ENCODE measurements at regions of chr1 and their contacts with region 1.

Region 1: DNA sequence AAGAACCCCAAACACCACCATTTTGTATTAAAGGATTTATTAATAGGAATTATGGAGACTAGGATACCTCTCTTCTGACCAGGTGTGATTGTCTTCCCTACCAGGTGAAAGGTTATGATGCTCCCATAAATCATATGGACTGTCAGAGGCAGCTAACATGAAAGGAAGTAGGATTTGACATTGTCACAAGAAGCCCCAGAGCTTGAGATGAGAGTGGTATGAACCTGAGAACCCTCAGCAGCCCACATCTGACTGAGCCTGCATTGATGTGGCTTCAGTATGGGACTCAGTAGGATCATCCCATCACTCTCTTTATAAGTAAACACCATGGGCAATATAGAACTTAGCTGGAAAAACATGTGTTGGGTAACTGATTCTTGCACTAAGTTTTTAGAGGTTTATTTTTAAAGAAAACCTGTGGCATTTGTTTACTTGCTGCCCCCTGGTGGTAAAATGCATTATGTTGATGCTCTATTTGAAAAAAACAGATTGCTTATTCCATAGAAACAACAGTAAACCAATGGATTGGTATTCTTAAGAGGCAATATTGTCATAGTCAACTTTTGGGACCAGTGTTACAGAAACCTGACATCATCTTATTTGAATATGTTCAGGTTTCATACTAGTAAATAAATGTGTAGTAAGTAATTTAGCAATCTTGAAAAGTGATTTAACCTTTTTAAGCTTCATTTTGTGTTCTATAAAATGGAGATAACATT is 16.6 kb upstream of the CACYBP start:
- DNase-seq: peak in 5 of 9 experiments; percentile 41 to 77 (median 63)
- ATAC-seq: peak; percentile 48
- H3K4me3 ChIP-seq: no peak overlapping the region
- H3K4me3 Mint-ChIP-seq: no peak overlapping the region
- H3K27ac ChIP-seq: no peak overlapping the region
- H3K27ac Mint-ChIP-seq: no peak overlapping the region
- H3K4me1 ChIP-seq: peaks cover 9% of the 10 kb centered on the region
- H3K4me1 Mint-ChIP-seq: peaks cover 38% of the 10 kb centered on the region
- H3K27me3 ChIP-seq: no peaks in the 10 kb centered on the region
- H3K27me3 Mint-ChIP-seq: no peaks in the 10 kb centered on the region
- CTCF ChIP-seq: peak; percentile 56

Region 2: DNA sequence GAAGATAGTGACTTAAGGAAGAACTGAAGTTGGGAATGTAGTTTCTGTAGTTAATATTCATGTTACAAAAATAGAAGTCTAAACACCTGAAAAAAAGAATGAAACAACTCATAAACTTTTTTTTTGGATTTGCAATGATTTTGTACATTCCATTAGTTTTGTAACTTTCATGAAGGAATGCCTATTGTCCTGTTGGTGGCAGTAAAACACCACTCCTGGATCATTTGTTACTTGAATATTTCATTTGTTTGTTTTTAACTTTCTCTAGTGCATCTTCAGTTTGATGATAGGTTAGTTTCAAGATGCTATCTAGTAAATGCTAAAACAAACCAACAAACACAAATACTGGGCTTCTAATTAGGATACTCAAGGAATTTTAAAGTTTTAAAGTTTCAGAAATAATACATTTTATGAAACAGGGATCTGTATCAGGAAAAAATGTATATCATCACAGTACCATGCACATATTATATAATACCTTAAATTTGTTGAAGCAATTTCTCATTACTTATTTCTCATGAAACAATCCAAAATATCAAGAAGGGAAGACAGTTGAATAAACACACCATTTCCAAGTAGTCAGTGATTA is 213.1 kb before region 1 on chr1:
- CTCF ChIA-PET with region 1: interaction called, 18 read pairs
- POLR2A ChIA-PET with region 1: interaction called, 8 read pairs
- intact Hi-C with region 1: loop called (anchors 1 kb)
- DNase-seq: peak in 2 of 9 experiments; percentile 64 to 75
- ATAC-seq: peak; percentile 65
- H3K4me3 ChIP-seq: no peak overlapping the region
- H3K4me3 Mint-ChIP-seq: no peak overlapping the region
- H3K27ac ChIP-seq: no peak overlapping the region
- H3K27ac Mint-ChIP-seq: no peak overlapping the region
- H3K4me1 ChIP-seq: no peaks in the 10 kb centered on the region
- H3K4me1 Mint-ChIP-seq: peaks cover 3% of the 10 kb centered on the region
- H3K27me3 ChIP-seq: no peaks in the 10 kb centered on the region
- H3K27me3 Mint-ChIP-seq: no peaks in the 10 kb centered on the region
- CTCF ChIP-seq: peak; percentile 78

Region 3: DNA sequence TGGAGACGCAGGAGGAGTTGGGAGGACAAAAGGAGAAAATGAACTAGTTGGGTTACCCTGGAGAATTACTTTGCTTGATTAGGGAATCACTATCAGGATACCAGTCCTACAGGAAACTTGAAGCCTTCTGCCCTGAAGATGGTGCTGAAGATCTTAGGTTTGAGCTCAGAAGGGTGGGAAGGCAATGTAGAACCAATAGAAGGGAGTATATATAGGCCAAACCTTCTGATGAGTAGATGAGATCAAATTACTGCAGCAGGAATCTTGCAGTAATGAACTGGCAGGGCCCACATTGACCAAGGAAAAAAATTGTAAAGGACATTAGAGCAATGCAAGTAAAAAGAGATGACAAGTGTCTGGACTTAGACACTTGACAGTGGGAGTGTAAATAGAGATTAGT is 99.7 kb before region 1 on chr1:
- CTCF ChIA-PET with region 1: interaction called, 17 read pairs
- POLR2A ChIA-PET with region 1: interaction called, 3 read pairs
- intact Hi-C with region 1: loop called (anchors 1 to 2 kb)
- DNase-seq: peak in 2 of 9 experiments; percentile 39 to 53
- ATAC-seq: peak; percentile 62
- H3K4me3 ChIP-seq: no peak overlapping the region
- H3K4me3 Mint-ChIP-seq: no peak overlapping the region
- H3K27ac ChIP-seq: no peak overlapping the region
- H3K27ac Mint-ChIP-seq: no peak overlapping the region
- H3K4me1 ChIP-seq: no peaks in the 10 kb centered on the region
- H3K4me1 Mint-ChIP-seq: peaks cover 6% of the 10 kb centered on the region
- H3K27me3 ChIP-seq: no peaks in the 10 kb centered on the region
- H3K27me3 Mint-ChIP-seq: no peaks in the 10 kb centered on the region
- CTCF ChIP-seq: no peak

Region 4: DNA sequence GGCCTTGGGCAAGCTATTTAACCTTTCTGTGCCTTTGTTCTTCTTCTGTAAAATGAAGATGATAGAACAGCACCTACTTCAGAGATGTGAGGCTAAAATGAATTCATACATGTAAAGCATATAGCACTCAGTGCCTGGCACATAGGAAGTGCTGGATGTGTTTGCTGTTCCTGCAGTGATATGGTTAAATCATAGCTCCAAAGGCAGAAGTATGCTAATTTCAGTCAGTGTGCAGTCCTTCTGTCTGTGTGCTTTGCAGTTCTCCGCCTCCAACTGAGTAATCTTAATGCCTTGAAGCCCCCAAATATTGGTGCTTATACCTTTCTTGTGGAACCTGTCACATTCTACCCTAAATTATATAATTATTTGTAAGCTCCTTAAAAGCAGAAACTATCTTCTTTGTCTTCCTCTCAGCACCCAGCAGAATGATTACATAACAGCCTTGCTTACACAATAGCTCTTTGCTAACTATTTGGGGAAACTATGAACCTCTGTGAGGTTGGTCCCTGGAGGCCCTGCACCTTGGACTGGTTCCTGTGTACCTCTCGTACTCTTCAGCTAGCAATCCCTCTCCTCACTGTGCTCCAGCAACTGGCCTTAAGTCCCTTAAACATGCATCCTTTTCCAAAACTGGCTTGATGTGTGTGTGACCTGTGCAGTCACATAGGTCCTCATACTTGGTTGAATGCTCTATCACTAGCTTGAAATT is 40.4 kb before region 1 on chr1:
- CTCF ChIA-PET with region 1: interaction called, 4 read pairs
- POLR2A ChIA-PET with region 1: no interaction called
- intact Hi-C with region 1: loop called (anchors 5 kb)
- DNase-seq: no peak
- ATAC-seq: no peak
- H3K4me3 ChIP-seq: no peak overlapping the region
- H3K4me3 Mint-ChIP-seq: no peak overlapping the region
- H3K27ac ChIP-seq: no peak overlapping the region
- H3K27ac Mint-ChIP-seq: no peak overlapping the region
- H3K4me1 ChIP-seq: peaks cover 5% of the 10 kb centered on the region
- H3K4me1 Mint-ChIP-seq: peaks cover 12% of the 10 kb centered on the region
- H3K27me3 ChIP-seq: no peaks in the 10 kb centered on the region
- H3K27me3 Mint-ChIP-seq: no peaks in the 10 kb centered on the region
- CTCF ChIP-seq: no peak

Region 5: DNA sequence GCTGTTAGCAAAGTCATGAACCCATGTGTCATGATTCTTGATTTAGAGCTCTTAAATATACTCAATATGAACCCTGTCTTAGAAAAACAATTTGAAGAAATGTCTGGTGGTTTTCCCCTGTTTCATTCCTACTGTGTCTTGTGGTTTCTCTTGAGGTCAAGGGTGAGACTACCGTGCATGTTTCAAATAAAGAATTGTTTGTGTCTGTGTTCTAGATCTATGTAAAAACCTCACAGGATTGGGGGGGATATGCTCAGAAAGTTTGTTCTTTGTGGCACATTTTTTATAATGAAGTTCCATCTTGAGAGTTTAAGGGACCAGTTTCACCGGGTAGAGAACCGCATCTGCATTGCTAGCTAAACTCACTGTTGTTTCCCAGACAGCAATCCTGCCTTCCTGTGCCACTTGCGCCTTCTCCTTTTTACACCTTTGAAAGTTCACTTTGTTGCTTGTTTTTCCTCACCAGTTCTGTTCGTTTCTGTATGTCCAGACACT is 14.3 kb before region 1 on chr1:
- CTCF ChIA-PET with region 1: interaction called, 61 read pairs
- POLR2A ChIA-PET with region 1: interaction called, 10 read pairs
- intact Hi-C with region 1: loop called (anchors 1 to 2 kb)
- DNase-seq: peak in 6 of 9 experiments; percentile 27 to 92 (median 53)
- ATAC-seq: peak; percentile 48
- H3K4me3 ChIP-seq: peak overlapping the region; percentile 2 to 16
- H3K4me3 Mint-ChIP-seq: peak overlapping the region; percentile 77
- H3K27ac ChIP-seq: peak overlapping the region; percentile 59 to 89
- H3K27ac Mint-ChIP-seq: peak overlapping the region; percentile 98
- H3K4me1 ChIP-seq: peaks cover 73% of the 10 kb centered on the region
- H3K4me1 Mint-ChIP-seq: peaks cover 76% of the 10 kb centered on the region
- H3K27me3 ChIP-seq: no peaks in the 10 kb centered on the region
- H3K27me3 Mint-ChIP-seq: no peaks in the 10 kb centered on the region
- CTCF ChIP-seq: no peak

Region 6: GRCh38 chr1:175133673-175134435 is 150.7 kb after region 1 on chr1:
- CTCF ChIA-PET with region 1: no interaction called
- POLR2A ChIA-PET with region 1: no interaction called
- intact Hi-C with region 1: no loop called
- DNase-seq: no peak
- ATAC-seq: no peak
- H3K4me3 ChIP-seq: no peak overlapping the region
- H3K4me3 Mint-ChIP-seq: no peak overlapping the region
- H3K27ac ChIP-seq: no peak overlapping the region
- H3K27ac Mint-ChIP-seq: no peak overlapping the region
- H3K4me1 ChIP-seq: no peaks in the 10 kb centered on the region
- H3K4me1 Mint-ChIP-seq: no peaks in the 10 kb centered on the region
- H3K27me3 ChIP-seq: no peaks in the 10 kb centered on the region
- H3K27me3 Mint-ChIP-seq: peaks cover 26% of the 10 kb centered on the region
- CTCF ChIP-seq: no peak

Measured in CD8-positive, alpha-beta T cell (primary cell).